ENCODE measurements at regions of chr5 and their contacts with region 1.

Region 1: DNA sequence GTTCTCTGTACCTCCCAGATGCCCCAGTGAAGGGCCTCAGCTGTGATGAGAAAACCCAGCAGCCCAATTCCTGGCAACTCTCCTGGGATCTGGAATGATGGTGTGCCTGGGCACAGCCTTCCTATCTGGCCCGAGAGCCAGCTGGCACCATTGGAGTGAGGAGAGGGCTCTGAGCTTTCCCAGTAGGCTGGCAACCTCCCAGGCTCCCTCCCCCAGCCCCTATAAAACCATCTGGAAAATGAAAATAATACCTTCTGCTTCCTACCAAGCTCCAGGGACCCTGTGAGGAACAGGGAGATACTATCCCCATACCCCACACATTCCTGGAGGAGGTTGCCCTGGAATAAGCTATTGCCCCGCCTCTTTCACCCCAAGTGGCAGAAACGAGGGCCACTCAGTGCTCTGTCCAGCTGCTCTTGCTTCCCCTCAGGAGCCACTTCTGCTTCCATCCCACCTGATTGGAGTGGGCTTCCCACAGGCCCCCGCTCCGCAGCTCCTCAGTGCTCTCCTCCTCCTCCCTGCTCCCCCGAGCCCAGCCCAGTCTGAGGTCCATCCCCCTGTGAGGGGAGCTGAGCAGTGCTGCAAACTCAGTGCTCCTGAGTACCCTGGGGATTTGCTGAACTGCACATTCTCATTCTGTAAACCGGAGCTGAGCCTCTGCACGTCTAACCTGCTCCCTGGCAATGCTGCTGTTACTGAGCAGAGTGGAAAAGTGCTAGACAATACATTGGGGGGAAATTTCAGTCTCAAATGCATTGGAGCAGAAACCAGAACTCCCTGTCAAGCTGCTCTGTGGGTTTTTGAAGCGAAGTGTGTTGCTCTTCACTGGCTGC is 74.7 kb downstream of the THBS4 start:
- DNase-seq: peak in 2 of 3 donors; percentile 61 to 74
- ATAC-seq: peak; percentile 51 to 66
- H3K4me3 ChIP-seq: no peak overlapping the region
- H3K27ac ChIP-seq: no peak overlapping the region
- H3K4me1 ChIP-seq: no peaks in the 10 kb centered on the region
- H3K27me3 ChIP-seq: no peaks in the 10 kb centered on the region

Region 2: DNA sequence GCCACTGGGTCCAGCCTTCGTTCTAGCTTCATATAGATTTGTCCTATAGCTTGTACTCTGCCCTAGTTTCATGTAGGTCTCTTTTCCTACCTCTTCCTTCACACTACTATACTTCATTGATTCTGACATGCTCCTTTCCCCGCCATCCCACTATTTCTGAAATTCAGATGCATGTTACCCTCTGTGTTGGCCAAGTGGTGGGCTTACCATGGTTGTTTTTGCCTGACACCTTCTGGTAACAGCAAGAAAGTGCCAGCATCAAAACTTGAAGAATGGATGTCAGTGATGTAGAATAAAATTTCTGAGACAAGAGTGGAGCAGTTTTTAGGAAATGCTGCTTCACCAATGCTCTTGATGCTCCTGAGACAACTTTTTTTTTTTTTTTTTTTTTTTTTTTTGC is 165.5 kb after region 1 on chr5:
- intact Hi-C with region 1: loop called in 1 of 4 experiments (anchors 10 kb)
- DNase-seq: no peak
- ATAC-seq: peak in 1 of 2 donors; percentile 59
- H3K4me3 ChIP-seq: no peak overlapping the region
- H3K27ac ChIP-seq: no peak overlapping the region
- H3K4me1 ChIP-seq: no peaks in the 10 kb centered on the region
- H3K27me3 ChIP-seq: no peaks in the 10 kb centered on the region

Region 3: DNA sequence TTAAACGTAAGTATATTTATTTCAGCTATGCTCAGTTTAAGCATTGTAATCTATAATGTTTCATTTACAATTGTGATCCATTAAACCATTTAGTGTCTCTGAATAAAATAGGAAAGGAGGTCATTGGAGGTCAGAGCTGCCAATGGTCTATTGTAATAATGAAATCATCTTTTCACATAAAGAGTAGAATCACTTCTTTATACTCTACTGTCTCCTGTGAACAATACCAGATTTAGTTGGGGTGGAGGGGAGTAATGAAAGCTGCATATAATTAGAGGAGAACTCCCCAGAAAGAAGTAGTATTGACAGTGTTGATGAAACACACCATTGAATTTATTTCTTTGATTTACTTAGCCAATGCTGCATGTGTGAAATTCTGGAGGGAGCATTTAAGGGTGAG is 262.9 kb after region 1 on chr5:
- intact Hi-C with region 1: no loop called
- DNase-seq: no peak
- ATAC-seq: no peak
- H3K4me3 ChIP-seq: no peak overlapping the region
- H3K27ac ChIP-seq: no peak overlapping the region
- H3K4me1 ChIP-seq: no peaks in the 10 kb centered on the region
- H3K27me3 ChIP-seq: no peaks in the 10 kb centered on the region